Heart left ventricle (tissue), 16 donors: ENCODE measurements at regions of chr2 and their contacts with region 1.

Region 1: DNA sequence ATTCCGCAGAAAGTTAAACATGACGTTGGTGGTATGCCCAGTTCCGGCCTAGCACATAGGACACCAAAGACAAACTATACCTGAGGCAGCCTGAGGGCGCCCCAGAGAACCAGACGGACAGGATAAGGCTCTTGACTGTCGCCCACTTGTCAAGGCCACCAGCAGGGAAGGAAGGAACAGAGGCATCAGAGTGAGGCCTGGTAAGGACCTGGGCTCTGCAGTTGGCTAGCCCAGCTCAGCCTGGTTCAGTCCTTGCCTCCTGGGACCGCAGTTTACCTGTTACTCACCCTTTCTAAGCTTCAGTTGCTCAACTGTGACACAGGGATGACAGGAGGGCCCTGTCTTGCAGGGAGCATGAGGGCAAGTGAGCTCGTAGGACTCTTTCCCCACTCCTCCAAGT is 82.1 kb downstream of the ACTR2 start:
- DNase-seq: peak in 1 of 5 donors; percentile 31
- ATAC-seq: peak in 1 of 4 donors; percentile 3
- H3K4me3 ChIP-seq: peak overlapping the region in 1 of 12 donors; percentile 7
- H3K27ac ChIP-seq: peak overlapping the region; percentile 62 to 92 (median 78)
- H3K4me1 ChIP-seq: peaks cover 0 to 35% (median 19%) of the 10 kb centered on the region in 12 donors
- H3K27me3 ChIP-seq: no peaks in the 10 kb centered on the region
- CTCF ChIP-seq: no peak
- POLR2A ChIP-seq: no peak

Region 2: DNA sequence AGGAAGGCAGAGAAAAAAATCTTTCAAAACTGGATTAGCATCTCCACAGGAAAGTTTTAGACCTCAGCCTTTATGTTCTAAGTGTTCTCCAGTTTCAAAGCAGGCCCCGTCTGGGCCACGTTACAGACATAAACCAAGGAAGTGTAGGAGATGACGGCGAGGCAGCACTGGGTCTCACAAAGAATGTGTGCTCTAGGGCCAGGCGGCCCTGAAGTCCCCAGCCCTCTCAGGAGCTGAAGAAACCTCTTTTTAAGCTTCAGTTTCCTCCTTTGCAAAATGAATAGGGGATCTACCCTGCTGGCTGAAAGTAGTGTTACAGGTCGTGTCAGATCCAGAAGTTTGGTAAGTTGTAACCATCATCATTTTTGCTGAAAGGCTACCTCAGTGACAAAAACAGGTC is 41.0 kb after region 1 on chr2:
- intact Hi-C with region 1: loop called in 1 of 10 experiments (anchors 5 kb)
- DNase-seq: no peak
- ATAC-seq: peak in 3 of 4 donors; percentile 5 to 37 (median 34)
- H3K4me3 ChIP-seq: no peak overlapping the region
- H3K27ac ChIP-seq: peak overlapping the region in 10 of 12 donors; percentile 2 to 54 (median 25)
- H3K4me1 ChIP-seq: peaks cover 3 to 54% (median 41%) of the 10 kb centered on the region in 12 donors
- H3K27me3 ChIP-seq: no peaks in the 10 kb centered on the region
- CTCF ChIP-seq: peak in 7 of 12 donors; percentile 7 to 39 (median 15)
- POLR2A ChIP-seq: no peak

Region 3: DNA sequence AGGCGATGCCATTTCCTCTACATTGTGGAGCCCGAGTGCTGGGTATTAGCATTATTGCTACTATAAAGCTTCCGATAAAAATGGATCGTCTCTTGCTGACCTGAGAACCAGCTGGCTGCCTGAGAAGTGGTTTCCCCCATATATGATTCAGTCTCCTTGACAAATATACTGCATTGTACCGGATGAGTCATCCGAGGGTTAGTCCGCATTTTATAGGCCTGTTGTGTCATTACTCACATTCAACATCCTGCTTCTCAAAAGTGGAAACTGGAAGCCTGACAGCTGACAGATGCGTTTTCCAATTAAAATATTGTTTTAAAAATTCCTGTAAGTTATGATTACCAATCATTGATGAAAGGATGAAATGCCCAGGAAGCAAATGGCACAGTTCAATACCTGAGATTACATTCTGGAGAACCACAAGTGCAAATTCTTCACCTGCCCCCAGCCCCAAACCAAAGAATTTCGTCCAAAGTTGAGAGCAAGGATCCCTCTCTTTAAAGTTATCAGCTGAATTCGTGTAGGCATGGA is 57.0 kb after region 1 on chr2:
- intact Hi-C with region 1: loop called in 1 of 10 experiments (anchors 5 kb)
- DNase-seq: peak in 1 of 5 donors; percentile 25
- ATAC-seq: peak in 3 of 4 donors; percentile 65 to 80 (median 76)
- H3K4me3 ChIP-seq: peak overlapping the region in 3 of 12 donors; percentile 15 to 23 (median 19)
- H3K27ac ChIP-seq: peak overlapping the region in 10 of 12 donors; percentile 0 to 73 (median 38)
- H3K4me1 ChIP-seq: peaks cover 3 to 76% (median 50%) of the 10 kb centered on the region in 12 donors
- H3K27me3 ChIP-seq: no peaks in the 10 kb centered on the region
- CTCF ChIP-seq: no peak
- POLR2A ChIP-seq: no peak

Region 4: GRCh38 chr2:65377556-65378192 is 68.0 kb after region 1 on chr2:
- intact Hi-C with region 1: loop called in 3 of 10 experiments (anchors 5 kb)
- DNase-seq: peak in 1 of 5 donors; percentile 49
- ATAC-seq: peak in 3 of 4 donors; percentile 76 to 81 (median 78)
- H3K4me3 ChIP-seq: no peak overlapping the region
- H3K27ac ChIP-seq: no peak overlapping the region
- H3K4me1 ChIP-seq: peaks cover 0 to 70% (median 40%) of the 10 kb centered on the region in 12 donors
- H3K27me3 ChIP-seq: no peaks in the 10 kb centered on the region
- CTCF ChIP-seq: no peak
- POLR2A ChIP-seq: no peak

Region 5: DNA sequence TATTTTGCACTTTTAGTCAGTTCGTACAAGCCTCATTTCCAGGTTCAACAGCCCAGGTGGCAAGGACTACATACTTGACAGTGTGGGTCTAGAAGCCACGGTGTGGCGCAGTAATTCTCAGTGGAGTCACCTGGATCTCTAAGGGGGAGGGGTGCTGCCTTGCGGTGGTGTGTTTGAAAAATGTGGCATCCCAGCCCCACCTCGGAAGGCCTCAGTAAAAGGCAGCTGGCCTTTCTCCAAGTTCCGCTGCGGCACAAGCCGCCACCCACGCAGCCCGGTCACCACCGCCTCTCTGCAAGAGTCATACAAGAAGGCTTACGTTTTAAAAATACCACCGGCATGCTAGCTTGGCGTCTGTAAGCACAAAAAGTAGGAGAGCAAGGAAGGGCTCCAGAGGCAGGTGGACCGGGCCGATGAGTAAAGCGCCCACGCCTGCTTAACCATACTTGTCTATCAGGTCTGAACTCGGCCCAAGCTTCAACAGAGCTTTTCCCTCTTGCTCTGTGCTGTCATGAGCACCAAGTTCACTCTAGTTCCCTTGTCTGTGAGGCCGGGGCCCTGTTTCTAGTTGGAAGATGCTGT is 73.2 kb after region 1 on chr2:
- intact Hi-C with region 1: loop called in 3 of 10 experiments (anchors 5 kb)
- DNase-seq: peak; percentile 80 to 88 (median 86)
- ATAC-seq: peak; percentile 43 to 82 (median 78)
- H3K4me3 ChIP-seq: peak overlapping the region in 8 of 12 donors; percentile 8 to 33 (median 22)
- H3K27ac ChIP-seq: peak overlapping the region; percentile 65 to 81 (median 71)
- H3K4me1 ChIP-seq: peaks cover 6 to 81% (median 59%) of the 10 kb centered on the region in 12 donors
- H3K27me3 ChIP-seq: no peaks in the 10 kb centered on the region
- CTCF ChIP-seq: peak in 3 of 12 donors; percentile 5 to 27 (median 6)
- POLR2A ChIP-seq: no peak

Region 6: DNA sequence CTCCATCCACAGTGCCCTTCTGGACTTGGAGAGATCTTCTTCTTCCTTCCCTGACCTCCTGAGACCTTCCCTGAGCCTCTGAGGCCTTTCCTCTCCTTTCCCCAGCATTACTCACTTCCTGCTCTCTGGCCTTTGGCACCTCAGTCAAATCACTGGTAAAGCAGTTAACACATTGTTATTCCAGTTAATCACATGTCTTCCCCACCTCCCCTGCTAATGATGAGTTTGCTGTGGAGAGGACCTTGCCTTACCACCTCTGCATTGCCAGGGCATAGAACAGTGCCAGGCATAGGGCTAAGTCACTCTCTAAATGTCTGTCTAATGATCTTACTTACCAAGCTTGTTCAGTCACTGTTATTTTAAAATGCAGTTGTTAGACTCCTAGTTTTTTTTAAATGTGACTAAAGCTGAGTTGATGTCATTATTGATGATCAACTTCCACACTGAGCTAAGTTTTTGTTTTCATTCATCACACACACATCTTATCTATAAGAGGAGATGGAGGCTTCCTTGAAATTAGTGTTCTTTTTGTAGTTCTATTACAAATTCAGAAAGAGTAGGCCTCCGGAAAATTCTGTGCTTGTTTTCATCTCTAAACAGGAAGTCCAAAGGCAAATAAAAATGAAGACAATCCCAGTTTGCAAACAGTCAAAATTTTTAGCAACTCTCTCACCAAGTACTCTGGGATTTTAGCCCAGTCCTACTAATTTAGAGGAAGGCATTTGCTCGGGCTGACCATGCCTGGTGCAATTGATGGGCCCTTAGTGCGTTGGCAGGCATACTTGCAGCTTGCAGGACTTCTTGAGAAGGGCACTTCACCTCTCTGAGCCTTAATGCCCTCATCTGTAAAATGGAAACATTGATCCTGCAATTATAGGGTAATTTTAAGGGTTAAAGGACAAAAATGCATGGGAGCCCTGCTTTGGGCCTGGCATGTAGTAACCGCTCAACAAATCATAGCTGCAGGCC is 236.4 kb after region 1 on chr2:
- intact Hi-C with region 1: loop called in 1 of 10 experiments (anchors 5 kb)
- DNase-seq: peak in 3 of 5 donors; percentile 24 to 46 (median 29)
- ATAC-seq: peak; percentile 53 to 95 (median 90)
- H3K4me3 ChIP-seq: no peak overlapping the region
- H3K27ac ChIP-seq: peak overlapping the region in 11 of 12 donors; percentile 13 to 74 (median 55)
- H3K4me1 ChIP-seq: peaks cover 0 to 21% (median 12%) of the 10 kb centered on the region in 12 donors
- H3K27me3 ChIP-seq: no peaks in the 10 kb centered on the region
- CTCF ChIP-seq: no peak
- POLR2A ChIP-seq: no peak